GM18951 (cell line): ENCODE measurements at regions of chr4 and their contacts with region 1.

Region 1: DNA sequence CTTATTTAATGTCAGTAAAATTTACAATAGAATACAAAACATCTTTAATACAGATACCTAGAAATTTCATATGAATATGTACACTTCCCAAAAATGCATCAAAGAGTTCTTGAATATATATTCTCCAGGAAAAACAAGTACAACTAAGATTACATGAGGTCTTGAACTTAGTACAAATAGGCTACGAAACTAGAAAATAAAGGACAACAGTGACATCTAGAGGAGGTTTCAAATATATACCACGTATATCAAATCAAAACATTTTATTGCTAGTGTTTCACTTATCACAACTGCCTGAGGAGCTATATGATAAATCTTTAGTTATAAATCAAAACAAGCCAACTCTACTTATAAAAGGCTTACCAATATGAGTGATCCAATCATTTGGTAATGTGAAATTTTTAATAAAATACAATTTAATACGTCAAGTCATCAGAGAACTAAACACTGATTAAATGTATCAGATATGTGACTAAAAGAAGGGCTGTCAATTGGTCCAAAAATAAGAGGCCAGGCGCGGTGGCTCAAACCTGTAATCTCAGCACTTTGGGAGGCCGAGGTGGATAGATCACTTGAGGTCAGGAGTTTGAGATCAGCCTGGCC is 36.6 kb downstream of the ANAPC10 start:
- POLR2A ChIP-seq: no peak

Region 2: GRCh38 chr4:144189121-144189520 is 872.3 kb before region 1 on chr4:
- in situ Hi-C with region 1: loop called (anchors 10 kb)
- POLR2A ChIP-seq: no peak